Activated naive CD4-positive, alpha-beta T cell treated with anti-CD3 and anti-CD28 coated beads for 36 hours (primary cell): ENCODE measurements at regions of chr17 and their contacts with region 1.

Region 1: GRCh38 chr17:21098934-21099689 is 27.7 kb upstream of the DHRS7B start:
- DNase-seq: peak; percentile 91
- H3K4me3 Mint-ChIP-seq: peak overlapping the region; percentile 90
- H3K27ac Mint-ChIP-seq: peak overlapping the region; percentile 89
- H3K4me1 Mint-ChIP-seq: no peaks in the 10 kb centered on the region
- H3K27me3 Mint-ChIP-seq: no peaks in the 10 kb centered on the region

Region 2: GRCh38 chr17:20908373-20909273 is 190.5 kb before region 1 on chr17:
- CTCF ChIA-PET with region 1: no interaction called
- intact Hi-C with region 1: loop called (anchors 1 kb)
- DNase-seq: peak; percentile 88
- H3K4me3 Mint-ChIP-seq: peak overlapping the region; percentile 78
- H3K27ac Mint-ChIP-seq: peak overlapping the region; percentile 65
- H3K4me1 Mint-ChIP-seq: peaks cover 5% of the 10 kb centered on the region
- H3K27me3 Mint-ChIP-seq: peaks cover 6% of the 10 kb centered on the region

Region 3: DNA sequence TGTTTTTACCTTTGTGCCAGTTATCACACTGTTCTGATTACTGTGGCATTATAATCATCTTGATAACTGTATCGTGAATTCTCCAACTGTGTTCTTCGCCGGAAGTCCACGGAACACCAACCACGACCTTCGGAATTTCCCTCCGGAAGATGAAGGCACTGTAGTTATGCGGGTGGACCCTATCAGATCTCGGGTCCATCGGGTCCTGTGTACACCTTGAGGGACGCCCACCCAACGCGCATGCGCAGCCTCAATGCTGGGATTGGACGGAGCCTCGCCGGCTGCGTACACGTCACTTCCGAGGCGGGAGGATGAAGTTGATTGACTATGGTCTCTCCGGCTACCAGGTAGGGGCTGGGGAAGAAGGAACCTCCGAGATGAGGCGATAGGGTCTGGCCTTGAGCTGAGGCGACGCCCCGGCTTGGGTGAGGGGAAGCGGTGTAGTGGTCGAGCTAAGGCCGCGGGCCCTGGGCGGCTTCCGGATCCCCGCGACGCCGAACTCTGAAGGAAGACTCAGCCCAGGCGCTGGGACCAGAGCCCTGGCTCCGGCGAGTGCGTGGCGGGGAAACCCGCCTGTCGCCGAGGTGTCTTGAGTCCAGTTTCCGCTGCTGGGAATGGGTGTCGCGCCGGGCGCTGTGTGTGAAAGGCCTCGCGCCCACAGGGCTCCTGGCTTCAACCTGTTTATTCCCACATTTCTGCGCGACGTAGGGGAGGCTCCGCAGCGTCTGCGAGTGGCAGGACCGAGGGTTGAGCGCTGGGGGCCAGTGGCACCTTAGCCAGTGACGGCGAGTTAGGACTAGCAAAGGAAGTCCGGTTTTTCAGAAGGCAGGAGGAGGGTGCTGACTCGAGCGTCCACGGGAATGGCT is 27.8 kb after region 1 on chr17 and contains the start of gene DHRS7B:
- CTCF ChIA-PET with region 1: interaction called, 11 read pairs
- intact Hi-C with region 1: loop called (anchors 1 kb)
- DNase-seq: peak; percentile 98
- H3K4me3 Mint-ChIP-seq: peak within 1 kb of the TSS; percentile 95
- H3K27ac Mint-ChIP-seq: peak within 1 kb of the TSS; percentile 94
- H3K4me1 Mint-ChIP-seq: peaks cover 35% of the 10 kb centered on the region
- H3K27me3 Mint-ChIP-seq: no peaks in the 10 kb centered on the region
- total RNA-seq, gene DHRS7B: 12.0 to 12.1 TPM

Region 4: GRCh38 chr17:21252796-21253645 is 153.9 kb after region 1 on chr17 and contains the start of gene NATD1:
- CTCF ChIA-PET with region 1: no interaction called
- intact Hi-C with region 1: loop called (anchors 1 kb)
- DNase-seq: peak; percentile 82
- H3K4me3 Mint-ChIP-seq: peak within 1 kb of the TSS; percentile 79
- H3K27ac Mint-ChIP-seq: no peak within 1 kb of the TSS
- H3K4me1 Mint-ChIP-seq: peaks cover 19% of the 10 kb centered on the region
- H3K27me3 Mint-ChIP-seq: no peaks in the 10 kb centered on the region
- total RNA-seq, gene NATD1: 2.1 to 2.5 TPM

Region 5: DNA sequence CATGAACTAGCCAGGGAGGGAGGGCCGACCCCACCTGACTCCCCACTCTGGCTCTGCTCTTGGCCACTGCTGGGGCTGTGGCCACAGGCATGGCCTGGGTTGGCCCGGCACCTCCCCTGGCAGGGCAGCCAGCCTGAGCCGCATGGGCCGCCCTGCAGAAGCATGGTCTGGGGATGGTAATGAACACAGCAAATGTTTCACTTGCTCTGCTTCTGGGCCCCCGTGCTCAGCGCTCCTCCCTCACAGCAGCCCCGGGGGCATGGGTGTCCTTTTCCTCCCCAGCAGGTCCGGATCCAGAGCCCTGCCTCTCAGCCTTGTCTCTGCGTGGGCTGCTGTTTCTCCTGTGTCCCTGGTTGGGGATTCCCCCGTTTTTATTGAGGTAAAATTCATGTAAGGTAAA is 246.1 kb after region 1 on chr17:
- CTCF ChIA-PET with region 1: no interaction called
- intact Hi-C with region 1: no loop called
- DNase-seq: no peak
- H3K4me3 Mint-ChIP-seq: no peak overlapping the region
- H3K27ac Mint-ChIP-seq: no peak overlapping the region
- H3K4me1 Mint-ChIP-seq: peaks cover 1% of the 10 kb centered on the region
- H3K27me3 Mint-ChIP-seq: no peaks in the 10 kb centered on the region